Sigmoid colon (tissue), 7 donors: ENCODE measurements at regions of chr18 and their contacts with region 1.

Region 1: GRCh38 chr18:62131301-62131909 is 55.5 kb downstream of the PIGN start:
- DNase-seq: peak; percentile 69
- H3K4me3 ChIP-seq: no peak overlapping the region
- H3K27ac ChIP-seq: no peak overlapping the region
- H3K4me1 ChIP-seq: no peaks in the 10 kb centered on the region
- H3K27me3 ChIP-seq: no peaks in the 10 kb centered on the region
- CTCF ChIP-seq: peak; percentile 72 to 97 (median 90)
- EP300 ChIP-seq: no peak
- POLR2A ChIP-seq: no peak

Region 2: DNA sequence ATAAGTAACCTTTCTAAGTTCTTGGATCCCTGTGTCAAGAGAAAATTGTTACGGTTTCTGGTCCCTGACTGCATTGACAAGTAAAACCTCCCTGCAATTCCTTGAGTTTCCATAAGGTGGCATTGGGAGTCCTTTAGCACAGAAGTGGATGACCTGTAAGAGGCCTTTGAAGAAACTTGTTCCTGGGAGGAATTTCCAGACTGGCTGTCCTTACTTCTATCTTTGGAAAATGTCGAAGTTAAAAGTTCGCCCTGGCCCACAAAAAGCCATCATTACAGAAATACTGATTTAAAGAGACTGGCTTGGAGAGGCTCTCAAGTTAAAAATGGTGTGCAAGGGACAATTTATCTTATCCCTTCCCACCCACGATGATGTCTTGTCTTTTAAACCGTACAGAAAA is 579.8 kb before region 1 on chr18:
- intact Hi-C with region 1: loop called (anchors 2 kb)
- DNase-seq: no peak
- H3K4me3 ChIP-seq: no peak overlapping the region
- H3K27ac ChIP-seq: no peak overlapping the region
- H3K4me1 ChIP-seq: peaks cover 0 to 2% (median 0%) of the 10 kb centered on the region in 4 donors
- H3K27me3 ChIP-seq: no peaks in the 10 kb centered on the region
- CTCF ChIP-seq: peak; percentile 21 to 78 (median 64)
- EP300 ChIP-seq: no peak
- POLR2A ChIP-seq: no peak

Region 3: GRCh38 chr18:61581578-61582201 is 549.7 kb before region 1 on chr18:
- intact Hi-C with region 1: loop called (anchors 1 kb)
- DNase-seq: peak; percentile 80
- H3K4me3 ChIP-seq: peak overlapping the region in 3 of 4 donors; percentile 16 to 28 (median 25)
- H3K27ac ChIP-seq: peak overlapping the region in 2 of 4 donors; percentile 11 to 66
- H3K4me1 ChIP-seq: peaks cover 0 to 15% (median 6%) of the 10 kb centered on the region in 4 donors
- H3K27me3 ChIP-seq: no peaks in the 10 kb centered on the region
- CTCF ChIP-seq: peak; percentile 61 to 98 (median 84)
- EP300 ChIP-seq: no peak
- POLR2A ChIP-seq: no peak

Region 4: GRCh38 chr18:61635901-61636528 is 495.4 kb before region 1 on chr18:
- intact Hi-C with region 1: loop called (anchors 2 kb)
- DNase-seq: peak; percentile 68
- H3K4me3 ChIP-seq: no peak overlapping the region
- H3K27ac ChIP-seq: peak overlapping the region in 1 of 4 donors; percentile 15
- H3K4me1 ChIP-seq: no peaks in the 10 kb centered on the region
- H3K27me3 ChIP-seq: no peaks in the 10 kb centered on the region
- CTCF ChIP-seq: peak; percentile 36 to 79 (median 74)
- EP300 ChIP-seq: no peak
- POLR2A ChIP-seq: no peak

Region 5: DNA sequence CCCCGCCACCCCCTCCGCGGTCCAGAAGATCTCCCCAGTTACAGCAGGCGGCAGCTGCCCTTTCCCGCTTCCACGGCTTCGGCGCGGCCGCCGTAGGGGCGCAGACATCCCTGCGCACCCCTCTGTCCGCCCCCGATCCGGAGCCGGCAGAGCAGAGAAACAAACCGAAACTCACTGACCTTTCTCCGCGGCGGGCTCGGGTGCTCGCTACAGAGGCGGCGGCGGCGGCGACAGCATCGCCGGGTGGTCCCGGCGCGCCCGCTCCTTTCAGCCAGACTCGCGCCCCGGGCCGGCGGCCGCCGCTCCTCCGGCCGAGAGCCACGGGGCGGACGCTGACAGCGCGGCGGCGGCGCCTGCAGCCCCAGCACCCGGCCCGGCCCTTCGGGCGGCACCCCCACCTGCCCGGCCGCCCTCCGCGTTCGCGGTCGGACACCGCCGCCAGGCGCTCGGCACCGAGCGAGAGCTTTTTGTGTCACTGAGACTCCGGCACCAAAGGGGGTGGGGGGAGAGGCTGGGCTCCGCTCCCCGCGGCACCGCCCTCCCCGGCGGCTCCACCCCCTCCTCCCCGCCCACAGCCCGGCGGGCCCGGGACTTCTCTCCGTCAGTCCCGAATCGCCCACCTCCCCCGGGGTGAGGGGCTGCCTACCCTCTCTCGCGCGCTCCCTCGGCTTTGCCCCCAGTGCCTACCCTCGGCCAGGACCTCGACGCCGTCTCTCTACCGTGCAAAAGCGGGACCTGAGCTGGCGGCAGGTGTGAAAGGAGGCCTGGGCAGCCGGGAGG is 237.2 kb before region 1 on chr18:
- intact Hi-C with region 1: loop called (anchors 5 kb)
- DNase-seq: peak; percentile 86
- H3K4me3 ChIP-seq: peak overlapping the region; percentile 69 to 97 (median 79)
- H3K27ac ChIP-seq: peak overlapping the region; percentile 59 to 82 (median 72)
- H3K4me1 ChIP-seq: peaks cover 0 to 42% (median 33%) of the 10 kb centered on the region in 4 donors
- H3K27me3 ChIP-seq: no peaks in the 10 kb centered on the region
- CTCF ChIP-seq: no peak
- EP300 ChIP-seq: no peak
- POLR2A ChIP-seq: peak in 1 of 2 donors; percentile 14

Region 6: GRCh38 chr18:62198259-62198658 is 66.9 kb after region 1 on chr18:
- intact Hi-C with region 1: no loop called
- DNase-seq: no peak
- H3K4me3 ChIP-seq: no peak overlapping the region
- H3K27ac ChIP-seq: no peak overlapping the region
- H3K4me1 ChIP-seq: peaks cover 0 to 13% (median 12%) of the 10 kb centered on the region in 4 donors
- H3K27me3 ChIP-seq: no peaks in the 10 kb centered on the region
- CTCF ChIP-seq: no peak
- EP300 ChIP-seq: no peak
- POLR2A ChIP-seq: no peak

Region 7: GRCh38 chr18:62300359-62300963 is 169.1 kb after region 1 on chr18:
- intact Hi-C with region 1: no loop called
- DNase-seq: no peak
- H3K4me3 ChIP-seq: no peak overlapping the region
- H3K27ac ChIP-seq: no peak overlapping the region
- H3K4me1 ChIP-seq: no peaks in the 10 kb centered on the region
- H3K27me3 ChIP-seq: no peaks in the 10 kb centered on the region
- CTCF ChIP-seq: no peak
- EP300 ChIP-seq: no peak
- POLR2A ChIP-seq: no peak